ENCODE measurements at regions of chr1 and their contacts with region 1.

Region 1: GRCh38 chr1:26321315-26322041 is 3.7 kb downstream of the CD52 start:
- DNase-seq: peak; percentile 85 to 98 (median 92)
- ATAC-seq: peak; percentile 93
- H3K4me3 ChIP-seq: peak overlapping the region; percentile 98
- H3K4me3 Mint-ChIP-seq: peak overlapping the region; percentile 79 to 99 (median 94)
- H3K27ac ChIP-seq: peak overlapping the region; percentile 77
- H3K27ac Mint-ChIP-seq: peak overlapping the region; percentile 87 to 99 (median 96)
- H3K4me1 ChIP-seq: peaks cover 42 to 45% of the 10 kb centered on the region in 2 donors
- H3K4me1 Mint-ChIP-seq: peaks cover 40 to 70% (median 48%) of the 10 kb centered on the region in 7 donors
- H3K27me3 ChIP-seq: no peaks in the 10 kb centered on the region
- H3K27me3 Mint-ChIP-seq: no peaks in the 10 kb centered on the region

Region 2: GRCh38 chr1:26279456-26280332 is 41.8 kb before region 1 on chr1 and contains the start of gene SH3BGRL3:
- CTCF ChIA-PET with region 1: interaction called, 541 read pairs
- POLR2A ChIA-PET with region 1: interaction called, 1,967 read pairs
- intact Hi-C with region 1: loop called (anchors 1 kb)
- DNase-seq: peak; percentile 73 to 89 (median 84)
- ATAC-seq: peak; percentile 77
- H3K4me3 ChIP-seq: peak within 1 kb of the TSS; percentile 58
- H3K4me3 Mint-ChIP-seq: peak within 1 kb of the TSS; percentile 80 to 98 (median 89)
- H3K27ac ChIP-seq: peak within 1 kb of the TSS; percentile 86
- H3K27ac Mint-ChIP-seq: peak within 1 kb of the TSS; percentile 83 to 99 (median 93)
- H3K4me1 ChIP-seq: peaks cover 80 to 82% of the 10 kb centered on the region in 2 donors
- H3K4me1 Mint-ChIP-seq: peaks cover 60 to 85% (median 71%) of the 10 kb centered on the region in 7 donors
- H3K27me3 ChIP-seq: no peaks in the 10 kb centered on the region
- H3K27me3 Mint-ChIP-seq: no peaks in the 10 kb centered on the region
- total RNA-seq, gene SH3BGRL3: 156 to 636 (median 224) TPM

Region 3: DNA sequence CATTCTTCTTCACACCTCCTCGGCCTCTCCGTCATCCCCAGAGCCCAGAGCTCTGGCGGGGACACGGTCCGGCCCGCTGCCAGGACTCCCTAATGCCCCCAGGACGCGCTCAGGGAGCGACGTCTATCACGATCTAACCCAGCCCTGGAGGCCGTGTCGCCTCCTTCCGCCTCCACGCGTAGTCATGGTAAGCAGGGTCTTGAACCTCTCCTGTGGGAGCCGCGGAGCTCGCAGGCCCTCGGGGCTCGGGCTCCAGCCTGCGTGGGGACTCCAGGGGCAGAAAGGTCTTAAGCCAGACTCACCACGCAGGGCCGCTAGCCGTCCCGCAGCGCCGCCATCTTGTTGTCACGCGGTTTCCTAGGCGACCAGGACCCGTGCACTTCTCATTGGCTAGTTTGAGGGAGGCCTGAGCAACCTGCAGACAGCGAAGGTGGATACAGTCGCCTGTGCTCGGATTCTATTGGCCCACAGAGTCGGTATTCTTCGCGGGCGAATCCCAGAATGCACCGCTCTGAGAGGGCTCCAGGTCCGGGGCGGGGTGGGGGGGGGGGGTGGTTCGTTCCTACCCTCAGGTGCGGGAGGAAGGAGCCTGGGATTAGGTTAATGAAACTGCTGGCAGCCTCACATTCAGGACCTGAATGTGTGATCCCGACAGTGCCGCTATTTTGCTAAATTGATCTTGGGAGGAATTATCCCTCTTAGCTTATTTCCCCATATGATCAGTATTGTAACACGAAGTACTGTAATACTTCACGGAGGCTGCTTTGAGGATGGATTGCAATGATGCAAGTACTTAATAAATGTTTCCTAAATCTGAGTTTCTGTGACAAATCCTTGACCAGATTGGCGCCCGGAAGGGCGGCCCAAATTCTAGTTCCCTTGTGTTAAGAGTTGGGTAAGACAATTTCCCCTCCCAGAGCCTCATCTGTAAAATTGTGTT is 14.9 kb before region 1 on chr1 and contains the start of gene UBXN11:
- CTCF ChIA-PET with region 1: interaction called, 43 read pairs
- POLR2A ChIA-PET with region 1: interaction called, 286 read pairs
- intact Hi-C with region 1: loop called (anchors 1 kb)
- DNase-seq: peak; percentile 66 to 95 (median 89)
- ATAC-seq: peak; percentile 99
- H3K4me3 ChIP-seq: peak within 1 kb of the TSS; percentile 87
- H3K4me3 Mint-ChIP-seq: peak within 1 kb of the TSS; percentile 93 to 99 (median 98)
- H3K27ac ChIP-seq: peak within 1 kb of the TSS; percentile 76
- H3K27ac Mint-ChIP-seq: peak within 1 kb of the TSS; percentile 90 to 99 (median 96)
- H3K4me1 ChIP-seq: peaks cover 16 to 31% of the 10 kb centered on the region in 2 donors
- H3K4me1 Mint-ChIP-seq: peaks cover 25 to 58% (median 34%) of the 10 kb centered on the region in 7 donors
- H3K27me3 ChIP-seq: no peaks in the 10 kb centered on the region
- H3K27me3 Mint-ChIP-seq: no peaks in the 10 kb centered on the region
- total RNA-seq, gene UBXN11: 35.7 to 131 (median 124) TPM

Region 4: GRCh38 chr1:26363549-26364448 is 42.3 kb after region 1 on chr1:
- CTCF ChIA-PET with region 1: interaction called, 26 read pairs
- POLR2A ChIA-PET with region 1: interaction called, 34 read pairs
- intact Hi-C with region 1: loop called (anchors 1 kb)
- DNase-seq: peak; percentile 71 to 87 (median 82)
- ATAC-seq: peak; percentile 84
- H3K4me3 ChIP-seq: no peak overlapping the region
- H3K4me3 Mint-ChIP-seq: peak overlapping the region in 6 of 10 donors; percentile 39 to 72 (median 40)
- H3K27ac ChIP-seq: no peak overlapping the region
- H3K27ac Mint-ChIP-seq: peak overlapping the region in 4 of 9 donors; percentile 20 to 52 (median 40)
- H3K4me1 ChIP-seq: peaks cover 30 to 44% of the 10 kb centered on the region in 2 donors
- H3K4me1 Mint-ChIP-seq: peaks cover 28 to 53% (median 47%) of the 10 kb centered on the region in 7 donors
- H3K27me3 ChIP-seq: no peaks in the 10 kb centered on the region
- H3K27me3 Mint-ChIP-seq: peaks cover 7 to 37% (median 16%) of the 10 kb centered on the region in 5 donors

Region 5: DNA sequence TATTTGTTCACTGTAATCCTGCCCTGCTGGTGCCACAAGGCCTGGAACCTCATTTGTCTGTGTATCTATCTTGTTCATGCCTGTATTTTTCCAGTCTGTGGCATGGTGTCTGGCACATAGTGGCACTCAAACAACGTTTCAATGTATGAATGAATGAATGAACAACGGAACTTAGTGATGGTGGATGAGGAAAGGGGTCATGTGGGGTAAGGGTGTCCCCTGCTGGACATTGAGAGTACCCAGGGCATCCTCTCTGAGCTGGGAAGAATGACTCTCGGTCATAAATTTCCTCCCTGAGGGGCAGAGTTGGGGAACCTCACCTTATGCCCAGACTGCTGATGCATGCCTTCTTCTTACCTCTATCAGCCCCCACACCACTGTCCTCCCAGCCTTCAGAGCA is 70.0 kb after region 1 on chr1:
- CTCF ChIA-PET with region 1: interaction called, 7 read pairs
- POLR2A ChIA-PET with region 1: interaction called, 7 read pairs
- intact Hi-C with region 1: loop called (anchors 1 kb)
- DNase-seq: peak in 5 of 9 donors; percentile 17 to 46 (median 43)
- ATAC-seq: peak; percentile 86
- H3K4me3 ChIP-seq: no peak overlapping the region
- H3K4me3 Mint-ChIP-seq: peak overlapping the region in 1 of 10 donors; percentile 55
- H3K27ac ChIP-seq: no peak overlapping the region
- H3K27ac Mint-ChIP-seq: peak overlapping the region in 2 of 9 donors; percentile 1 to 64
- H3K4me1 ChIP-seq: peaks cover 6 to 18% of the 10 kb centered on the region in 2 donors
- H3K4me1 Mint-ChIP-seq: peaks cover 8 to 49% (median 18%) of the 10 kb centered on the region in 7 donors
- H3K27me3 ChIP-seq: no peaks in the 10 kb centered on the region
- H3K27me3 Mint-ChIP-seq: peaks cover 0 to 14% (median 0%) of the 10 kb centered on the region in 5 donors